Motor neuron (in vitro differentiated cells): ENCODE measurements at regions of chr5 and their contacts with region 1.

Region 1: DNA sequence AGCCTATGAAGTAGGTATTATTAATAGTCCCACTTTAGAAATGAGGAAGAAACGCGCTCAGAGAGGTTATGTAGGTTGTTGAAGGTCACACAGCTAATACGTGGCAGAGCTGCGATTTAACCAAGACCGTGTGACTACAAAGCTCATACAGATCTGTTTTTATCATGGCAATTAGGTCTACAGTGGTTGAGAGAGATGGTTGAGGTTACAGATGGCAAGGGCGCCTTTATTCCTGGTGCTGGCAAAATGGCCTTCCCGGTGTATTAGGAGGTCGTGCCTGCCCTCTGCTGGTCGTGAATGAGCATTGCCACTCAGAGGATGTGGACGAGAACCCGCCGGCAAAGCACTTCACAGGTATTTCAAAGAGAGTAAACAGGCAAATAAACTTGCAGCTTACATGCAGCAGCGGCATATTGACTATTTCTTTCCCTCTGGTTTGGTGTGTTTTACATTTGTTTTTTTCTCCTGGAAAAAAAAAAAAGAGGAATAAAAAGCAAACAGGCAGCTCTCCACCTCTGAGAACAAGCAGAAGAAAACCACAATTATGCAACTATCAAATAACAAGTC is 65.3 kb upstream of the EGFLAM start:
- ATAC-seq: peak; percentile 42 to 83 (median 61)
- H3K4me3 ChIP-seq: no peak overlapping the region
- H3K27ac ChIP-seq: no peak overlapping the region
- H3K4me1 ChIP-seq: no peaks in the 10 kb centered on the region

Region 2: DNA sequence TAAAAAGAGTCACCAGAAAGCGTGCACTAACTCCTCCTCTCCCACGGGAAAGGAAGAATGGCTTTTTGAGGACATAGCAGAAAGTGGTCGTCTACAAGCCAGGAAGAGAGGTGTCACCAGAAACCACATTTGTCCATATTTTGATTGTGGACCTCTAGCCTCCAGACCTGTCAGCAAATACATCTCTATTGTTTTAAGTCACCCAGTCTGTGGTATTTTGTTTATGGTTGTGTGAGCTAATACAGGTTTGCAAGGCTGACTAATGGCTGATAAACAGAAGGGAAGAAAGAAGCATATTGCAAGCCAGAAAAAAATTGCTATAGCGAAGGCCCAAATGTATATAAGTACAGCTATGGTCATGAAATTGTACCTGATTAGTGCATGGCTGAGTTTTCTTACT is 792.6 kb before region 1 on chr5:
- in situ Hi-C with region 1: loop called in 6 of 9 experiments (anchors 10 to 25 kb)
- ATAC-seq: no peak
- H3K4me3 ChIP-seq: no peak overlapping the region
- H3K27ac ChIP-seq: no peak overlapping the region
- H3K4me1 ChIP-seq: no peaks in the 10 kb centered on the region

Region 3: GRCh38 chr5:37412515-37413277 is 780.4 kb before region 1 on chr5:
- in situ Hi-C with region 1: loop called in 7 of 9 experiments (anchors 10 to 25 kb)
- ATAC-seq: peak in 7 of 8 experiments; percentile 24 to 94 (median 89)
- H3K4me3 ChIP-seq: no peak overlapping the region
- H3K27ac ChIP-seq: no peak overlapping the region
- H3K4me1 ChIP-seq: no peaks in the 10 kb centered on the region

Region 4: GRCh38 chr5:37837414-37838032 is 355.6 kb before region 1 on chr5:
- in situ Hi-C with region 1: loop called in 5 of 9 experiments (anchors 10 to 25 kb)
- ATAC-seq: peak; percentile 15 to 46 (median 31)
- H3K4me3 ChIP-seq: peak overlapping the region; percentile 18 to 42 (median 26)
- H3K27ac ChIP-seq: no peak overlapping the region
- H3K4me1 ChIP-seq: peaks cover 15% of the 10 kb centered on the region in 2 donors

Region 5: GRCh38 chr5:38023799-38024198 is 169.3 kb before region 1 on chr5:
- in situ Hi-C with region 1: loop called in 1 of 9 experiments (anchors 25 kb)
- ATAC-seq: no peak
- H3K4me3 ChIP-seq: no peak overlapping the region
- H3K27ac ChIP-seq: no peak overlapping the region
- H3K4me1 ChIP-seq: no peaks in the 10 kb centered on the region